ENCODE measurements at regions of chr15 and their contacts with region 1.

Region 1: GRCh38 chr15:35078221-35078915 is 6.7 kb downstream of the NANOGP8 start:
- DNase-seq: peak; percentile 75
- ATAC-seq: peak; percentile 81 to 91; a peak in 5 of 6 replicates
- H3K4me3 ChIP-seq: no peak overlapping the region
- H3K27ac ChIP-seq: no peak overlapping the region
- H3K4me1 ChIP-seq: no peaks in the 10 kb centered on the region
- CTCF ChIP-seq: peak; percentile 98
- EP300 ChIP-seq: no peak
- POLR2A ChIP-seq: no peak
- RAD21 ChIP-seq: peak; percentile 97

Region 2: DNA sequence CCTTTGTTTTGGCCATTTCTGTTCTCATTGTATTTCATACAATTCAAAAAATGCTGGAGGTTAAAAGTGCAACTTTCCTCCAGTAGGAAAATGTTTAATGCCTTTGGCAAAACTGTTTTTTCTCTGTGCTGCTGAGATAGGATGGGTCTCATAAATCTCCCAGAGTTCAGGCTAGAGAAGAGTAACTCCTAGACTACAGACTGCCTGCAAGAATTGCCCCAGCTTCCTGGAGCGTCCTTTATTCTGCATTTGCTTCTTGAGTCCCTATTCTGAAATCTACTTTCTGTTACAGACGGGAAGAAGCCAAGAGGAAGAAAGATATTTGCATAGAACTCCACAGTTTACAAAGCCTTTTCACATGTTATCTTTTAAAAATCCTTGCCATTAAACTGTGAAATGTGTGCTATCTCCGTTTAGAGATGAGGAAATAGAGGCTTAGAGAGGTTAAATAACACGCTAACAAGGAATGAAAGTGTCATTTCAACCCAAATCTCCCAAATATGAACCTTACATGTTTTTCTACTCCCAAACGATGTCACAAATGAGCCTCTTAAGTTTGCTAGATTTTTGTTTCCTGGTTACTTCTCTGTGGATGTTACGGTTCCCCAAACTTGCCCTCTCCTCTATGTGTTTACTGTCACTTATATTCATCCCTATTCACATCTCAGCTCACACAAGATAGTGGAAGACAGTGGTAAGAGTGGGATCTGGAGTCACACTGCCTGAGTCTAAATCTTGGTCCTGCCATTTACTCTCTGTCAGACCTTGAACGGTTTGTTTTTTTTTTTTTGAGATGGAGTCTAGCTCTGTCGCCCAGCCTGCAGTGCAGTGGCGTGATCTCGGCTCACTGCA is 10.6 kb before region 1 on chr15:
- CTCF ChIA-PET with region 1: interaction called, 22 read pairs
- POLR2A ChIA-PET with region 1: no interaction called
- DNase-seq: no peak
- ATAC-seq: peak in 1 of 2 experiments; percentile 28; a peak in 2 of 6 replicates
- H3K4me3 ChIP-seq: no peak overlapping the region
- H3K27ac ChIP-seq: no peak overlapping the region
- H3K4me1 ChIP-seq: no peaks in the 10 kb centered on the region
- CTCF ChIP-seq: no peak
- EP300 ChIP-seq: no peak
- POLR2A ChIP-seq: no peak
- RAD21 ChIP-seq: no peak

Region 3: GRCh38 chr15:35089551-35089950 is 11.2 kb after region 1 on chr15:
- CTCF ChIA-PET with region 1: interaction called, 28 read pairs
- POLR2A ChIA-PET with region 1: no interaction called
- DNase-seq: no peak
- ATAC-seq: no peak
- H3K4me3 ChIP-seq: no peak overlapping the region
- H3K27ac ChIP-seq: no peak overlapping the region
- H3K4me1 ChIP-seq: no peaks in the 10 kb centered on the region
- CTCF ChIP-seq: no peak
- EP300 ChIP-seq: no peak
- POLR2A ChIP-seq: no peak
- RAD21 ChIP-seq: no peak

Region 4: GRCh38 chr15:35095941-35096340 is 17.6 kb after region 1 on chr15:
- CTCF ChIA-PET with region 1: interaction called, 28 read pairs
- POLR2A ChIA-PET with region 1: no interaction called
- DNase-seq: no peak
- ATAC-seq: no peak
- H3K4me3 ChIP-seq: no peak overlapping the region
- H3K27ac ChIP-seq: no peak overlapping the region
- H3K4me1 ChIP-seq: no peaks in the 10 kb centered on the region
- CTCF ChIP-seq: no peak
- EP300 ChIP-seq: no peak
- POLR2A ChIP-seq: no peak
- RAD21 ChIP-seq: no peak

Region 5: DNA sequence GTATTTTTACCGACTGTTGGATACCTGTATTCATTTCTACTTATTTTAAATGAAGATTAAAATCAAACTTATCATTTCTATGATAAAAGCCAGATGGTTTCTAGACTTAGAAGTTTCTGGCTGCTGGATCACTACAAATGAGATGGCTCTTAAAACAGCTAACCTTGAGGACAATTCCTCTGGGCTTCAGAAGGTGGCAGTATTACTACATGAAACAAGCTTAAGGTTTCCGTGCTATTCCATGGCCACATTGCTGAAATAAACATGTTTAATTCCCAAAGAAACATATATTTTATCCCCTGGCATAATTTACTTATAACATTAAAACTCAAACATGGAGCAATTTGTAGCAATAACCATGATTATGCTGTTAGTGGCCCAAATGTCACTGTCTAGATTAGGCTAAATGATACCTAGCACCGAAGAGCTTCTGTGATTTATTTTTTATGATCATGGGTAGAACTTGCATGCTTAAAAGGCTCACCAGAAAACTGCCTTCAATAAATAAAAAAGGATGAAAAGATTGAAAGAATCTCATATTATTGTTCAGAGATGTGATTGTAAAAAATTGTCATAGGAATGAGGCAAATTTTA is 210.8 kb after region 1 on chr15:
- CTCF ChIA-PET with region 1: interaction called, 13 read pairs
- POLR2A ChIA-PET with region 1: no interaction called
- DNase-seq: peak; percentile 42 to 72
- ATAC-seq: peak; percentile 75 to 80; a peak in 5 of 6 replicates
- H3K4me3 ChIP-seq: no peak overlapping the region
- H3K27ac ChIP-seq: no peak overlapping the region
- H3K4me1 ChIP-seq: peaks cover 12% of the 10 kb centered on the region; the same call in 2 of the 3 replicates
- CTCF ChIP-seq: peak; percentile 91
- EP300 ChIP-seq: no peak
- POLR2A ChIP-seq: no peak
- RAD21 ChIP-seq: peak; percentile 94 to 95

Region 6: DNA sequence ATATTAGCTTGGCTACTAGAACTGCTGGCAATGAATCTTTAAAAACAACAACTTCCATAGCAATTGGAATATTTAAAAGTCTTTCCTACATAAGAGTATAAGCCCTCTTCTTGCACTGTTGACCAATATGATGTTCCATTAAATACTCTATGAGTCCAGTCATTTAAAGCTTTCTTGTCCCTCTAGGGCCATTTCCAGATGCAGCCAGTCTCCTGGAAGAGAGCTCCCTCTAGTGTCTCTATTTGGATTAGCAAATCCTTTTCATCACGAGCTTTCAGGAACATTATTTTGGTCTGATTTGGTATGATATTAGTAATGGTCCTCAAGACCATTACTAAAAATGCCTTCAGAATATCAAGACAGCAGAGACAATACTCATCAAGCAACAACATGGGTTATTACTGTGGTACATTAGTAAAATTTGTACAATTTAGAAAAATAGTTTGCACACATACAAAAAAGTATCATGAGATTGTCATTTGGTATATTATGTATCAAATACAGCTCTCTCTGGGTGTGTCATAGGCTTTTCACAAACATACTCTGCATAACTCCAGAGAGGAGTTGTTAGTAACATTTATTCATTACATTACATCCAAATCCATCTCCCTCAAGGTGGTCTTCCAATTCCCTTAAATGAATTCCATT is 366.3 kb after region 1 on chr15:
- CTCF ChIA-PET with region 1: interaction called, 28 read pairs
- POLR2A ChIA-PET with region 1: no interaction called
- DNase-seq: peak; percentile 8 to 47
- ATAC-seq: peak; percentile 39 to 54; a peak in 2 of 6 replicates
- H3K4me3 ChIP-seq: no peak overlapping the region
- H3K27ac ChIP-seq: no peak overlapping the region
- H3K4me1 ChIP-seq: peaks cover 15% of the 10 kb centered on the region; the same call in 2 of the 3 replicates
- CTCF ChIP-seq: peak; percentile 65
- EP300 ChIP-seq: no peak
- POLR2A ChIP-seq: no peak
- RAD21 ChIP-seq: peak; percentile 62 to 73

Measured in A549 (cell line).